Activated CD8-positive, alpha-beta T cell treated with anti-CD3 and anti-CD28 coated beads for 36 hours (primary cell): ENCODE measurements at regions of chr1 and their contacts with region 1.

Region 1: GRCh38 chr1:201309426-201309825 is 26.1 kb downstream of the PKP1 start:
- DNase-seq: peak; percentile 29
- ATAC-seq: no peak
- H3K4me3 Mint-ChIP-seq: no peak overlapping the region
- H3K27ac Mint-ChIP-seq: no peak overlapping the region
- H3K4me1 Mint-ChIP-seq: peaks cover 13% of the 10 kb centered on the region
- H3K27me3 Mint-ChIP-seq: peaks cover 10% of the 10 kb centered on the region
- CTCF ChIP-seq: no peak

Region 2: DNA sequence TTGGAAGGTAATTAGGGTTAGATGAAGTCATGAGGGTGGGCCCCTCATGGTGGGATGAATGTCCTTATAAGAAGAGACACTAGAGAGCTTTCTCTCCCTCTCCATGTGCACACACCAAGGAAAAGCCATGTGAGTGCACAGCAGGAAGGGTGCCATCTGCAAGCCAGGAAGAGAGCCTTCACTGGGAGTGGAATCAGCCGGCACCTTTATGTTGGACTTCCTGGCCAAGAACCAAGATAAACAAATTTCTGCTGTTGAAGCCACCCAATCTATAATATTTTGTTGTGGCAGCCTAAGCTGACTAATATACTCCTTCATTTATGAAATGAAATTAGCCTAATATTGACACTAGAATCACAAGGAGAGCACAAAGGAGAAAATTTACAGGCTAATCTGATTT is 64.3 kb before region 1 on chr1:
- CTCF ChIA-PET with region 1: no interaction called
- POLR2A ChIA-PET with region 1: no interaction called
- intact Hi-C with region 1: loop called (anchors 10 kb)
- DNase-seq: no peak
- ATAC-seq: no peak
- H3K4me3 Mint-ChIP-seq: no peak overlapping the region
- H3K27ac Mint-ChIP-seq: no peak overlapping the region
- H3K4me1 Mint-ChIP-seq: no peaks in the 10 kb centered on the region
- H3K27me3 Mint-ChIP-seq: peaks cover 22% of the 10 kb centered on the region
- CTCF ChIP-seq: no peak

Region 3: DNA sequence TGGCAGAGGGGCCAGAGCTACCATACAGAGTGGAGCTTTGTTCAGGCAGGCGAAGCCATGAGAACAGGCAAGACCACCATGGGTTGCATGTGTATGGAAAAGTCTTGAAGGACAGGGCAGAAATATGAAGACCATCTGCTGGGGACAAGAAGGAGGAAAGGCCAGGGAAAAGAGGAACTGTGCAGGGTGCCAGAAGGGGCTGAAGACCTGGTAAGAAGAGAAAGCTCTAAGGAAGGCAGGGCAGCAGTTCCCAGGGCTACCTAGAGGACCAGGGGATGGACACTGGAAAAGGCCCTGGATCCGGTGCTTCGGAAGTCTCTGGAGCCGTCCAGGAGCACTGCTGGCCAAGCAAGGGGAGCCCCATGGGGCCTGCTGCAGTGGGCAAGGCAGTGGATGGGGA is 17.3 kb after region 1 on chr1:
- CTCF ChIA-PET with region 1: no interaction called
- POLR2A ChIA-PET with region 1: no interaction called
- intact Hi-C with region 1: no loop called
- DNase-seq: no peak
- ATAC-seq: no peak
- H3K4me3 Mint-ChIP-seq: no peak overlapping the region
- H3K27ac Mint-ChIP-seq: no peak overlapping the region
- H3K4me1 Mint-ChIP-seq: no peaks in the 10 kb centered on the region
- H3K27me3 Mint-ChIP-seq: no peaks in the 10 kb centered on the region
- CTCF ChIP-seq: no peak